ENCODE measurements at regions of chr17 and their contacts with region 1.

Region 1: GRCh38 chr17:55366020-55366481 is 55.6 kb downstream of the MMD start:
- DNase-seq: no peak
- ATAC-seq: no peak
- H3K4me3 ChIP-seq: no peak overlapping the region
- H3K27ac ChIP-seq: no peak overlapping the region
- H3K4me1 ChIP-seq: no peaks in the 10 kb centered on the region
- H3K27me3 ChIP-seq: no peaks in the 10 kb centered on the region
- CTCF ChIP-seq: no peak
- POLR2A ChIP-seq: no peak

Region 2: DNA sequence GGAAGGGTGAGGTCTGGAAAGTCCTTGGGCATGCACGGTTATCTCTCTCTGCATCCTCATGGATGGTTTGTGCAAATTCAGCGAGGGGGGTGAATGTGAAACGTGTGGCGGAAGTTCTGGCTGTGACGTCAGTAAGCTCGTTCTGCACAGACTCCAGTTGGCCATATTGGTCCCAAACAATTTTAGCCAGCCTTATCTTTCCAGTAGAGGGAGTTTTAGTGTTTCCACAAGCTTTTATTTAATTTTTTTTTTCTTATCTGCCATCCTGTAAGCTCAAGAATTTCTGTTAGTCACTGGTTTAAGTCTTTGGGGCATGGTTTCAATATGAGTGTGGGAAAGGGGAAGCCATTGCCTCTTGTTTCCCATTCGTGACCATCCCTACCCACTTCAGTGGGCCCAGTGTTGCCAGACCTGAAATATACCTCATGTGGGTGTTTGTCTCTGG is 62.3 kb before region 1 on chr17:
- intact Hi-C with region 1: loop called in 1 of 10 experiments (anchors 10 kb)
- DNase-seq: no peak
- ATAC-seq: no peak
- H3K4me3 ChIP-seq: no peak overlapping the region
- H3K27ac ChIP-seq: no peak overlapping the region
- H3K4me1 ChIP-seq: peaks cover 0 to 21% (median 15%) of the 10 kb centered on the region in 12 donors
- H3K27me3 ChIP-seq: no peaks in the 10 kb centered on the region
- CTCF ChIP-seq: no peak
- POLR2A ChIP-seq: no peak